Caco-2 (cell line): ENCODE measurements at regions of chrX and their contacts with region 1.

Region 1: DNA sequence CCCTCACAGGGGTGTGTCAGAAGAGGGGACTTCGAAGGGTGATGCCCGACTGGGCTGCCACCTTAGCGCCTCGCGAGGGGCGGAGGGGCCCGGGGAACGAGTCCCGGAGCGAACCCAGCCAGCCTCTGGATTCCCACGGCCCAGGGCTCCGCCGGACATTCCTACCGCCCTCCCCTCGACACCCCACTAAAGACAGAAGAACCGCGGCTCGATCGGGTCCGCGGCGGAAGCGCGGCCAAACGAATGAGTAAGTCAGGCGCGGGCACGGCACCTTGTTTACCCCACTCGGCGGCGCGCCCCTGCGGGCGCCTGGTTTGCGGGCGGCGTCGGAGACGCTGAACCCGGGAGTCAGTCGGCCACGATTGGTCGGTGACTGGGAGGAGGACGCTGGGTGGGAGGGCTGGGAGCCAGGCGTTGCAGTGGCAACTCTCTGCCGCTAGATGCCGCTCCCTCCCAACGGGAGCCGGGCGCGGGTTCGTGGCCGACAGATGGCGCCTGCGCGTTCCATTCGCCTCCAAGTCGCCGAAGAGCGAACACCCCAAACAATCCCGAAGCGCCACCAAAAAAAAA is 1.4 kb upstream of the STAG2 start:
- DNase-seq: peak; percentile 87 to 90
- H3K4me3 ChIP-seq: peak overlapping the region; percentile 78
- H3K4me3 Mint-ChIP-seq: peak overlapping the region; percentile 98
- H3K27ac Mint-ChIP-seq: peak overlapping the region; percentile 100
- H3K4me1 ChIP-seq: peaks cover 6% of the 10 kb centered on the region; the same call in 1 of the 2 replicates
- H3K4me1 Mint-ChIP-seq: peaks cover 8% of the 10 kb centered on the region
- H3K27me3 ChIP-seq: no peaks in the 10 kb centered on the region
- H3K27me3 Mint-ChIP-seq: no peaks in the 10 kb centered on the region
- CTCF ChIP-seq: peak; percentile 77 to 96

Region 2: DNA sequence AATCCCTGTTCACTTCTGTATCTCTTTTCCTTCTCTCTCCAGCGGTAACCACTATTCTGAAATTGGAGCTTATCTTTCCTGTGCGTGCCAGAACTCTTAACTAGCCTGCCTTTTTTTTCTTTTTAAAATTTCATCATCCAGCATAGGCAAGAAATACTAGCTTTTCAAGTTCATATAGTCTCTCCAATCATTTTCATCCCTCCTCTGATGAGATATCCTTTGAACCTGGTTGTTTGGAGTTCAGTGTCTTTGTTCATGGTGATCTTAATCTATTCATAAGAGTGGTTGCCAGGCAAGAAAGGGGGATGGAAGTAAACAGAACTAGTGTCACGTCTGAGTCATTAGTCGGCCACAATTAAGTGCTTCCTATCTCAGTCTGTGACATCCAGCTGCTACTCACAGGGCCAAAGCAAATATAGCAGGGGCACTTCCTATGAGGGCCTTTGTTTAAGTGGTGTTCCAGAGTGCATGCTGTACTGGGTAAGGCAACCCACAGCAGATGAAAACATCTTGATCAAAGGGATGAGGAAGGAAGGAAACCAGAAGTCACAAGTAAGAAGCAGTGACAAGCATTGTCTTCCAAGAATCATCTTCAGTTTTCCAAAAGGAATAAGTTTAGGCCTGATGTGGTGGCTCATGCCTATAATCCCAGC is 156.7 kb before region 1 on chrX:
- CTCF ChIA-PET with region 1: no interaction called
- POLR2A ChIA-PET with region 1: no interaction called
- intact Hi-C with region 1: loop called (anchors 1 kb)
- DNase-seq: peak; percentile 80 to 82
- H3K4me3 ChIP-seq: no peak overlapping the region
- H3K4me3 Mint-ChIP-seq: peak overlapping the region; percentile 50
- H3K27ac Mint-ChIP-seq: peak overlapping the region; percentile 91
- H3K4me1 ChIP-seq: peaks cover 7% of the 10 kb centered on the region
- H3K4me1 Mint-ChIP-seq: peaks cover 10% of the 10 kb centered on the region
- H3K27me3 ChIP-seq: no peaks in the 10 kb centered on the region
- H3K27me3 Mint-ChIP-seq: no peaks in the 10 kb centered on the region
- CTCF ChIP-seq: no peak

Region 3: DNA sequence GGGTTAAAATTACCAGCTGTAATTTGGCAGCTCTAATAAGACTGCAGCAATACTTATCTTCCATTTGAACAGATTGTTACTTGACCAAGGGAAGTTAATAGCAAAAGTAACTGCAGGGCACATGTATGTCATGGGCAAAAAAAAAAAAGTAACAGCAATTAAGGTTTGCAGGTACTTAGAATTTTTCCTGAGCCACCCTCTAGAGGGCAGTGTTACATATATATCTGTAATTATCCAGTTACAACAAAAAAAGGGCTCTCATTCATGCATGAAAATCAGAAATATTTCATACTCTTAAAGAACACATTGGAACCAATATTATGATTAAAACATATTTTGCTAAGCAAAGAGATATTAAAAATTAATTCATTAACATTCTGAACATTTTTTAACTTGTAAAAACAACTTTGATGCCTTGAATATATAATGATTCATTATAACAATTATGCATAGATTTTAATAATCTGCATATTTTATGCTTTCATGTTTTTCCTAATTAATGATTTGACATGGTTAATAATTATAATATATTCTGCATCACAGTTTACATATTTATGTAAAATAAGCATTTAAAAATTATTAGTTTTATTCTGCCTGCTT is 75.2 kb before region 1 on chrX:
- CTCF ChIA-PET with region 1: no interaction called
- POLR2A ChIA-PET with region 1: no interaction called
- intact Hi-C with region 1: loop called (anchors 1 kb)
- DNase-seq: peak in 1 of 2 experiments; percentile 60
- H3K4me3 ChIP-seq: no peak overlapping the region
- H3K4me3 Mint-ChIP-seq: no peak overlapping the region
- H3K27ac Mint-ChIP-seq: no peak overlapping the region
- H3K4me1 ChIP-seq: no peaks in the 10 kb centered on the region
- H3K4me1 Mint-ChIP-seq: peaks cover 11% of the 10 kb centered on the region
- H3K27me3 ChIP-seq: no peaks in the 10 kb centered on the region
- H3K27me3 Mint-ChIP-seq: no peaks in the 10 kb centered on the region
- CTCF ChIP-seq: peak; percentile 35 to 44

Region 4: GRCh38 chrX:123976706-123977316 is 16.7 kb after region 1 on chrX:
- CTCF ChIA-PET with region 1: interaction called, 7 read pairs
- POLR2A ChIA-PET with region 1: interaction called, 22 read pairs
- intact Hi-C with region 1: loop called (anchors 1 kb)
- DNase-seq: peak in 1 of 2 experiments; percentile 43
- H3K4me3 ChIP-seq: no peak overlapping the region
- H3K4me3 Mint-ChIP-seq: no peak overlapping the region
- H3K27ac Mint-ChIP-seq: no peak overlapping the region
- H3K4me1 ChIP-seq: no peaks in the 10 kb centered on the region
- H3K4me1 Mint-ChIP-seq: peaks cover 11% of the 10 kb centered on the region
- H3K27me3 ChIP-seq: no peaks in the 10 kb centered on the region
- H3K27me3 Mint-ChIP-seq: no peaks in the 10 kb centered on the region
- CTCF ChIP-seq: peak in 1 of 2 experiments; percentile 12

Region 5: DNA sequence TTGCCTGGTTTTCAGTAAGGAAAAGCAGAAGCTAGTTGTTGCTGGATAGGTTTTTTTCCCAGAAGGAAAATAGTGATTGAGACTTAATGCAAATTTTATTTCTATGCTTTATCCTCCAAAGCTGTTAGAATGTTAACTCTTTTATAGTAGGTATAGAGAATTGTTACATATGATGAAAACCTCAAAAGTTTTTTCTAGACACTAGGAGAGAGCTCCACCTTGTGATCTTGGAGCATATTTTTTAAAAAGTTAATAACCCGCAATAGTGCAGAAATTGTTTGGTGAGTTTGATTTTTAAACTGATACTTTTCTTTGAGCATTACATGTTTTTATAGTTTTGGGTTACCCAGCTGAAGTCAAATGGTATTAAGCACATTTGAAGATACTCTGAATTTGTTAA is 57.9 kb after region 1 on chrX:
- CTCF ChIA-PET with region 1: no interaction called
- POLR2A ChIA-PET with region 1: no interaction called
- intact Hi-C with region 1: loop called (anchors 1 kb)
- DNase-seq: no peak
- H3K4me3 ChIP-seq: no peak overlapping the region
- H3K4me3 Mint-ChIP-seq: no peak overlapping the region
- H3K27ac Mint-ChIP-seq: no peak overlapping the region
- H3K4me1 ChIP-seq: no peaks in the 10 kb centered on the region
- H3K4me1 Mint-ChIP-seq: no peaks in the 10 kb centered on the region
- H3K27me3 ChIP-seq: no peaks in the 10 kb centered on the region
- H3K27me3 Mint-ChIP-seq: no peaks in the 10 kb centered on the region
- CTCF ChIP-seq: no peak

Region 6: DNA sequence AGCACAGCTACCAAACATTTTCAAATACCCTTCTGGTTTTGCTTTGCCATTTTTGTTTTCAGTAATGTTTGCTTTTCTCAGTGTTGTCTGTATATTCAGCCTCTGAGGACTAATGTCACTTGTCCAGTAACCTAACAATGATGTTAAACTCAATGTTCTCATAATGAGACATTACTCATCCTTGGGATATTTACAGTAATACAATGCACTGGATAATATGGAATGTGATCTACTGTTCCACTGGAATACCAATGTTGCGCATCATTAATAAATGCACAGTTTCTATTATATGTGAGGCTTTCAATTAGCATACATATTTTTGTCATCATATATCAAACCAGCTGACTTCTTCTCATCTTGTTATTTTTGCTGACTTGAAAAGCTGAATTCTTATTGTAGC is 645.4 kb after region 1 on chrX:
- CTCF ChIA-PET with region 1: no interaction called
- POLR2A ChIA-PET with region 1: no interaction called
- intact Hi-C with region 1: no loop called
- DNase-seq: no peak
- H3K4me3 ChIP-seq: no peak overlapping the region
- H3K4me3 Mint-ChIP-seq: no peak overlapping the region
- H3K27ac Mint-ChIP-seq: no peak overlapping the region
- H3K4me1 ChIP-seq: no peaks in the 10 kb centered on the region
- H3K4me1 Mint-ChIP-seq: no peaks in the 10 kb centered on the region
- H3K27me3 ChIP-seq: no peaks in the 10 kb centered on the region
- H3K27me3 Mint-ChIP-seq: peaks cover 5% of the 10 kb centered on the region
- CTCF ChIP-seq: no peak